ENCODE measurements at regions of chr17 and their contacts with region 1.

Region 1: GRCh38 chr17:81666342-81667191 is at the starts of genes CCDC137 and OXLD1:
- DNase-seq: peak; percentile 91
- ATAC-seq: peak; percentile 98
- H3K4me3 Mint-ChIP-seq: peak within 1 kb of the TSS; percentile 91
- H3K27ac Mint-ChIP-seq: peak within 1 kb of the TSS; percentile 83
- H3K4me1 Mint-ChIP-seq: peaks cover 28% of the 10 kb centered on the region
- H3K27me3 Mint-ChIP-seq: no peaks in the 10 kb centered on the region
- CTCF ChIP-seq: no peak
- total RNA-seq, gene CCDC137: 34.7 and 41.3 TPM in 2 replicates
- total RNA-seq, gene OXLD1: 36.7 and 37.3 TPM in 2 replicates

Region 2: GRCh38 chr17:81285179-81285878 is 381.2 kb before region 1 on chr17:
- CTCF ChIA-PET with region 1: no interaction called
- POLR2A ChIA-PET with region 1: no interaction called
- intact Hi-C with region 1: no loop called
- DNase-seq: peak; percentile 49
- ATAC-seq: peak; percentile 71
- H3K4me3 Mint-ChIP-seq: peak overlapping the region; percentile 86
- H3K27ac Mint-ChIP-seq: peak overlapping the region; percentile 89
- H3K4me1 Mint-ChIP-seq: peaks cover 30% of the 10 kb centered on the region
- H3K27me3 Mint-ChIP-seq: no peaks in the 10 kb centered on the region
- CTCF ChIP-seq: no peak

Region 3: GRCh38 chr17:81309070-81309905 is 357.3 kb before region 1 on chr17:
- CTCF ChIA-PET with region 1: no interaction called
- POLR2A ChIA-PET with region 1: no interaction called
- intact Hi-C with region 1: no loop called
- DNase-seq: no peak
- ATAC-seq: peak; percentile 68
- H3K4me3 Mint-ChIP-seq: no peak overlapping the region
- H3K27ac Mint-ChIP-seq: no peak overlapping the region
- H3K4me1 Mint-ChIP-seq: peaks cover 11% of the 10 kb centered on the region
- H3K27me3 Mint-ChIP-seq: peaks cover 5% of the 10 kb centered on the region
- CTCF ChIP-seq: no peak

Region 4: DNA sequence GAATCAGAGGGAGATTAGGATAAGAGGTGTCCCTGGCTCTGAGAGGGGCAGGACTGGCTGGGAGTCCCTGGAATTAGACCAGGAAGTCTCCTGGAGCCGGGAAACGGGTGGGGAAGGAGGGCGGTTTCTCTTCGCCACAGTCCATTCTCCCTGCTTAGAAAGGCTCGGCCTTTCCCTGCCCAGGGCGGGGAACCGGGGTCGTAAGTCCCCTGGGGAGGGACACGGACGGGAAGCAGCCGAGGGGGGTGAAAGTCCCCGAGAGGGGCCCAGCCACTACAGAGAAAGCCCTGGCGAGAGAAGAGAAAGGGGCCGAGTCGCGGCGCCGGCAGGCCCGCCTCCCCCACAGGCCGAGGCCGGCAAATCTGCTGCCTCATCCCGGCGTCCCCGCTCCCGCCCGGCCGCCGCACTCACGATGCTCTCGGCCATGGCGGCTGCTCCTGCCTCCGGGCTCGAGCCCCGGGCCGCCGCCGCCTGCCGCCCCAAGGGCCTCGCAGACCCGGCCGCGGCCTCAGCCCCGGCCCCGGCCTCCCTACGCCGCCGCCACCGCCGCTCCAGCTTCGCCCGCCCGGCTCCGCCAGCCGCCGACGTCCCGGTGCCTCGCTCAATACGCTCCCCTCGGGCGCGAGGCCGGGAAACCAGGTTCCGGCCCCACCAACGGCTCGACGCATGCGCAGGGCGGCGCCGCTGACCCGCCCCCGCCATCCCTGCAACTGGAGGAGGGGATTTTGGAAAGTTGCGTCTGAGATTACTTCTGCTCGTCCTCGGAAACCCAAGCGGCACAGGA is 29.9 kb before region 1 on chr17 and contains the starts of genes NPLOC4 and TSPAN10:
- CTCF ChIA-PET with region 1: no interaction called
- POLR2A ChIA-PET with region 1: interaction called, 10 read pairs
- intact Hi-C with region 1: loop called (anchors 1 kb)
- DNase-seq: peak; percentile 85
- ATAC-seq: peak; percentile 89
- H3K4me3 Mint-ChIP-seq: peak within 1 kb of the TSS; percentile 95
- H3K27ac Mint-ChIP-seq: peak within 1 kb of the TSS; percentile 77
- H3K4me1 Mint-ChIP-seq: peaks cover 21% of the 10 kb centered on the region
- H3K27me3 Mint-ChIP-seq: no peaks in the 10 kb centered on the region
- CTCF ChIP-seq: no peak
- total RNA-seq, gene NPLOC4: 96.8 and 132 TPM in 2 replicates
- total RNA-seq, gene TSPAN10: 0.34 and 0.95 TPM in 2 replicates

Region 5: DNA sequence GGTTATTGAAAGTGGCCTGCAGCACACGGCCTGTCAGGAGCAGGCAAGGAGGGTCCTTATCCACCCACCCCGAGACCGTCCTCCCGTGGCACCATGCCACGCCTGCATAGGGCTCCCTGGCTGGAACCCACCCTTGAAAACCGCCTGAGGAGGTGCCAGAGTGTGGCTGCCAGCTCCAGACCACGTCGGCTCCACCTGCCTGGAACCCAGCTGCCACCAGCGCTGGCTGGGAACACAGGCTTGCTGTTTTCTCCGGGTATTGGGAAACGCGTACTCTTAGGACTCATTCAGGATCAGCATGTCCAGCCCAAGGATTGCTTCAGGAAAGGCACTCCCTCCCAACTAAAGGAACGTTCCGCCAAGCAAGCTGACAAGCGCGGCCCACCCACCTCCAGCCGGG is 10.3 kb after region 1 on chr17:
- CTCF ChIA-PET with region 1: interaction called, 4 read pairs
- POLR2A ChIA-PET with region 1: interaction called, 26 read pairs
- intact Hi-C with region 1: no loop called
- DNase-seq: no peak
- ATAC-seq: no peak
- H3K4me3 Mint-ChIP-seq: no peak overlapping the region
- H3K27ac Mint-ChIP-seq: no peak overlapping the region
- H3K4me1 Mint-ChIP-seq: peaks cover 8% of the 10 kb centered on the region
- H3K27me3 Mint-ChIP-seq: no peaks in the 10 kb centered on the region
- CTCF ChIP-seq: no peak

Region 6: GRCh38 chr17:81683584-81684237 is 17.1 kb after region 1 on chr17 and contains the starts of genes ARL16 and HGS:
- CTCF ChIA-PET with region 1: no interaction called
- POLR2A ChIA-PET with region 1: interaction called, 26 read pairs
- intact Hi-C with region 1: loop called (anchors 1 kb)
- DNase-seq: peak; percentile 96
- ATAC-seq: peak; percentile 97
- H3K4me3 Mint-ChIP-seq: peak within 1 kb of the TSS; percentile 95
- H3K27ac Mint-ChIP-seq: peak within 1 kb of the TSS; percentile 91
- H3K4me1 Mint-ChIP-seq: peaks cover 34% of the 10 kb centered on the region
- H3K27me3 Mint-ChIP-seq: no peaks in the 10 kb centered on the region
- CTCF ChIP-seq: no peak
- total RNA-seq, gene ARL16: 30.7 and 33.3 TPM in 2 replicates
- total RNA-seq, gene HGS: 132 and 151 TPM in 2 replicates

Region 7: GRCh38 chr17:81702971-81703746 is 36.6 kb after region 1 on chr17 and contains the start of gene MRPL12:
- CTCF ChIA-PET with region 1: no interaction called
- POLR2A ChIA-PET with region 1: interaction called, 25 read pairs
- intact Hi-C with region 1: loop called (anchors 2 kb)
- DNase-seq: peak; percentile 84
- ATAC-seq: peak; percentile 94
- H3K4me3 Mint-ChIP-seq: peak within 1 kb of the TSS; percentile 89
- H3K27ac Mint-ChIP-seq: peak within 1 kb of the TSS; percentile 86
- H3K4me1 Mint-ChIP-seq: peaks cover 38% of the 10 kb centered on the region
- H3K27me3 Mint-ChIP-seq: no peaks in the 10 kb centered on the region
- CTCF ChIP-seq: no peak
- total RNA-seq, gene MRPL12: 68.8 and 69.8 TPM in 2 replicates

Region 8: DNA sequence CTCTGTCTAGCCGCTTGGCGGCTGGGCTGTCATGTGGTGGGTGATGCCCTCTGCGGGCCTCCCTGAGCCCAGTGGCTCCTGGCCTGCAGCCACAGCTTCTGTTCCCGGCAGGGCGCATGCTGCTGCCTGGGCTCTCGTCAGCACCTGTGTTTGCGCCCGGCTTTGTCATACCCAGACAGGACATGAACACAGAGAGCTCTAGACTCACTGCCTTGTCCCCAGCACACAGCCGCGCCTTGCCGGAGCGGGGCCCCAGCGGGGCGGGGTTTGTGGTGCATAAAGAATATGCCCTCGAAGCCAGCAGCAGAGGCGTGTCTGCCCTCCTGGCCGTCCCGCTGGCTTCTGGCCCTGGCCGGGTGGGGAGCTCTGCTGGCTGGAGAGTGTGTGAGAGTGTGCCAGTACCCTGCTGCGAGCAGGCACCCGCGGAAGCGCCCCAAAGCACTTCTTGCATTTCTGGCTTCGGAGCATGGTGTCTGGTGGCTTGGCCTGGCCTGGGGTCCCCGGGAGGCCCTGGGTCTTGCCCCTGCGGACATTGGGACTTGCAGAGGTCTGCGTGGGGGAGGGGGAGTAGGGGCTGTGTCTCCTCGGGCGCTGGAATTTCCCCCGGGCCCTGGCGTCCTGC is 325.2 kb after region 1 on chr17:
- CTCF ChIA-PET with region 1: no interaction called
- POLR2A ChIA-PET with region 1: no interaction called
- intact Hi-C with region 1: no loop called
- DNase-seq: no peak
- ATAC-seq: no peak
- H3K4me3 Mint-ChIP-seq: no peak overlapping the region
- H3K27ac Mint-ChIP-seq: no peak overlapping the region
- H3K4me1 Mint-ChIP-seq: no peaks in the 10 kb centered on the region
- H3K27me3 Mint-ChIP-seq: no peaks in the 10 kb centered on the region
- CTCF ChIP-seq: no peak

Measured in activated B cell treated with CpG ODN at 0.5 μM for 24 hours (primary cell).